CD4-positive, alpha-beta memory T cell (primary cell): ENCODE measurements at regions of chr5 and their contacts with region 1.

Region 1: GRCh38 chr5:160473681-160474080 is 52.0 kb downstream of the PTTG1 start:
- DNase-seq: no peak
- H3K4me3 ChIP-seq: no peak overlapping the region
- H3K4me3 Mint-ChIP-seq: peak overlapping the region; percentile 1 to 99 (median 76)
- H3K27ac ChIP-seq: peak overlapping the region; percentile 70
- H3K27ac Mint-ChIP-seq: peak overlapping the region; percentile 15 to 95 (median 65)
- H3K4me1 ChIP-seq: peaks cover 87% of the 10 kb centered on the region
- H3K4me1 Mint-ChIP-seq: peaks cover 62 to 95% (median 73%) of the 10 kb centered on the region in 4 donors
- H3K27me3 ChIP-seq: no peaks in the 10 kb centered on the region
- H3K27me3 Mint-ChIP-seq: no peaks in the 10 kb centered on the region

Region 2: GRCh38 chr5:160458806-160459800 is 14.6 kb before region 1 on chr5:
- CTCF ChIA-PET with region 1: interaction called, 10 read pairs
- POLR2A ChIA-PET with region 1: interaction called, 4 read pairs
- intact Hi-C with region 1: no loop called
- DNase-seq: no peak
- H3K4me3 ChIP-seq: no peak overlapping the region
- H3K4me3 Mint-ChIP-seq: no peak overlapping the region
- H3K27ac ChIP-seq: no peak overlapping the region
- H3K27ac Mint-ChIP-seq: peak overlapping the region in 1 of 7 donors; percentile 7
- H3K4me1 ChIP-seq: peaks cover 2% of the 10 kb centered on the region
- H3K4me1 Mint-ChIP-seq: peaks cover 0 to 3% (median 3%) of the 10 kb centered on the region in 4 donors
- H3K27me3 ChIP-seq: no peaks in the 10 kb centered on the region
- H3K27me3 Mint-ChIP-seq: peaks cover 0 to 2% of the 10 kb centered on the region in 2 donors